ENCODE measurements at regions of chr14 and their contacts with region 1.

Region 1: GRCh38 chr14:32076278-32077080 is 625 bp upstream of the ARHGAP5 start:
- DNase-seq: peak; percentile 98
- H3K4me3 ChIP-seq: peak overlapping the region; percentile 88
- H3K27ac ChIP-seq: peak overlapping the region; percentile 85
- H3K4me1 ChIP-seq: peaks cover 12% of the 10 kb centered on the region
- H3K27me3 ChIP-seq: no peaks in the 10 kb centered on the region
- CTCF ChIP-seq: no peak

Region 2: GRCh38 chr14:31510222-31510621 is 566.3 kb before region 1 on chr14:
- CTCF ChIA-PET with region 1: no interaction called
- POLR2A ChIA-PET with region 1: no interaction called
- intact Hi-C with region 1: loop called (anchors 10 kb)
- DNase-seq: peak; percentile 38
- H3K4me3 ChIP-seq: no peak overlapping the region
- H3K27ac ChIP-seq: no peak overlapping the region
- H3K4me1 ChIP-seq: no peaks in the 10 kb centered on the region
- H3K27me3 ChIP-seq: no peaks in the 10 kb centered on the region
- CTCF ChIP-seq: peak; percentile 73

Region 3: GRCh38 chr14:31937721-31938346 is 138.6 kb before region 1 on chr14:
- CTCF ChIA-PET with region 1: interaction called, 3 read pairs
- POLR2A ChIA-PET with region 1: no interaction called
- intact Hi-C with region 1: loop called (anchors 10 kb)
- DNase-seq: peak; percentile 20
- H3K4me3 ChIP-seq: no peak overlapping the region
- H3K27ac ChIP-seq: no peak overlapping the region
- H3K4me1 ChIP-seq: peaks cover 11% of the 10 kb centered on the region
- H3K27me3 ChIP-seq: no peaks in the 10 kb centered on the region
- CTCF ChIP-seq: no peak

Region 4: DNA sequence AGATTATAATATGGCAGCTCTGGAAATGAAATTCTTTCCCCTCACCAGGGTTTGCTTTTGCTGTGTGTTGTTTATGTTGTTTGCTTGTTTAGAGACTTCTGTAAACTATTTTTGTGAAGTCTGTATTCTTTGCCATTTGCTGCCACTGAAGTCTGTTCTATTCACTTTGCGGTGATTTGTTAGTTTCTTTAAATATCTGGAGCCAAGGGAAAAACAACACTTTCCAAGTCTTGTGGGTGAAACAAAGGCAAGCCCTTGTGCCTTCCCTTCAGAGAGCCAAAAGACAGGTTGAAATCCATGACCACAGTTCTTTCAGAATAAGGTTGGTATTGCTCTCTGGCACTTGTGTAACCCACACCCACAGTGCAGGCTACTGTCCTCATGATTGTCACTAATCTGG is 65.9 kb after region 1 on chr14:
- CTCF ChIA-PET with region 1: no interaction called
- POLR2A ChIA-PET with region 1: no interaction called
- intact Hi-C with region 1: loop called (anchors 5 kb)
- DNase-seq: no peak
- H3K4me3 ChIP-seq: no peak overlapping the region
- H3K27ac ChIP-seq: no peak overlapping the region
- H3K4me1 ChIP-seq: no peaks in the 10 kb centered on the region
- H3K27me3 ChIP-seq: no peaks in the 10 kb centered on the region
- CTCF ChIP-seq: no peak

Region 5: DNA sequence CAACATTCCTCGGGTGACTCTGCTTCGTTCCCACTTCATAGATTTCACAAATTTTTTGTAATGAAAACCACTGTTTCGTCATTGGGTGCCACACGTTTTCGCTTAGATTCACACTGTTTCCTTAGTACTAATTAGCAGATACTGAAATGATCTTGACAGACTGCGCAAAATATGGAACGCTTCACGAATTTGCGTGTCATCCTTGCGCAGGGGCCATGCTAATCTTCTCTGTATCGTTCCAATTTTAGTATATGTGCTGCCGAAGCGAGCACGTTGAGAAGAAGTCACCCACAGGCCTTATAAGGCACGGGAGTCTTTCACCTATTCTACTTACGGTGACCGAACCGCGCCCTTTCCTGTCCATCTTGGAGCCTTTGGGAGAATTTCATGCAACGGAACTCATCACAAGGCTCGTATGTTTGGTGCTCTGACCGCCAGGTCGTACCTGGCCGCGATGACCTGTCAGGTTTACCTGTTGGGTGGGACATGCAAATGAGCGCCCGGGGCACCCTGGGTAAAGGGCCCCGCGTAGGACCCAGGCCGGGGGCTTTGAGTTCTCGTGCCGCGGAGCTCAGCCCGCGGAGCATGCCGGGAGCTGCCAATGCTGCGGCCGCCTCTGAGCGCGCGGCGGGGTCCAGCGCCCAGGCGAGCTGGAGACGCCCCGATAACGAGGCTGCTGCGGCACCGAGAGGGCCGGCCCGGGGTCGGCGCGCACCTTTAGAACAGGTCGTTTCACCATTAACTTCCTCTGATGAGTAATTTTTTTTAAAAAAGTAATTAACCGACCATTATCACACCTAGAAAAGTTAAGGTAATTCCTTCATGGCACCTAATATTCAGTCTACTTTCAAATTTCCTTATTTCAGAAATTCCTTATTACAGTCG is 126.8 kb after region 1 on chr14 and contains the start of gene RNU6-8:
- CTCF ChIA-PET with region 1: interaction called, 3 read pairs
- POLR2A ChIA-PET with region 1: no interaction called
- intact Hi-C with region 1: loop called (anchors 1 kb)
- DNase-seq: peak; percentile 95
- H3K4me3 ChIP-seq: peak within 1 kb of the TSS; percentile 73
- H3K27ac ChIP-seq: peak within 1 kb of the TSS; percentile 97
- H3K4me1 ChIP-seq: no peaks in the 10 kb centered on the region
- H3K27me3 ChIP-seq: no peaks in the 10 kb centered on the region
- CTCF ChIP-seq: no peak
- total RNA-seq, gene RNU6-8: not detected in 2 replicates

Region 6: DNA sequence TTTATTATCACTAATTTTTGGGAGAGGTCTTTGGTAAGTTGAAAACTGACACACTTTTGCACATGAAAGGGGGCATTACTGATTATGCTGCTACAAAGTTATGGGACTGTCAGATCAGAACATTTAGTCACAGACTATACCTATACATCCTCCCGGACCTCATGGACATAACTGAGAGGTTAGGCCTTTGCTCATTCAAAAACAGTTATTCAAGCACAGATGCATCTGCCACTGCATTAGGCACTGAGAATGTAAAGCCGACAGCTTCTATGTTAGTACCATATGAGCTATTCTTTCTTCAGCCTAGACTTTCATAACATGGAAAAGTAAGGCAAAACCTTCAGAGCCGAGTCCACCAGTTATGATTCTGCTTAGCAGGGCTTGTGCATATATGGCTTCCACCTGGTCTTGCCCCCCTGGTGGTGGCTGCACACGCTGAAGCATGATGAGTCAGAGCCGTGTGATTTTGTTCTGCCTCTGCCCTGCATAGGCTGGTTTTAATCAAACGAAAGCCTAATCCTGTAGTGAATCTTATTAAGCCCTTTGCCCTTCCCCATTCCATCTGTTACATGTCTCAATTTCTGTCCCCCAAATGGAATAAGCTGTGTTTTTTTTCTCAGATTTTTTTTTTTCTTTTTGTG is 148.4 kb after region 1 on chr14:
- CTCF ChIA-PET with region 1: no interaction called
- POLR2A ChIA-PET with region 1: no interaction called
- intact Hi-C with region 1: no loop called
- DNase-seq: peak; percentile 54
- H3K4me3 ChIP-seq: no peak overlapping the region
- H3K27ac ChIP-seq: no peak overlapping the region
- H3K4me1 ChIP-seq: no peaks in the 10 kb centered on the region
- H3K27me3 ChIP-seq: no peaks in the 10 kb centered on the region
- CTCF ChIP-seq: peak; percentile 32; the same call in 1 of the 2 replicates

Region 7: GRCh38 chr14:32560209-32560857 is 483.9 kb after region 1 on chr14:
- CTCF ChIA-PET with region 1: no interaction called
- POLR2A ChIA-PET with region 1: no interaction called
- intact Hi-C with region 1: loop called (anchors 5 kb)
- DNase-seq: peak; percentile 79
- H3K4me3 ChIP-seq: no peak overlapping the region
- H3K27ac ChIP-seq: no peak overlapping the region
- H3K4me1 ChIP-seq: peaks cover 16% of the 10 kb centered on the region
- H3K27me3 ChIP-seq: no peaks in the 10 kb centered on the region
- CTCF ChIP-seq: peak; percentile 95

Measured in A673 (cell line).